Activated B cell treated with CpG ODN at 0.5 μM for 24 hours (primary cell): ENCODE measurements at regions of chr3 and their contacts with region 1.

Region 1: DNA sequence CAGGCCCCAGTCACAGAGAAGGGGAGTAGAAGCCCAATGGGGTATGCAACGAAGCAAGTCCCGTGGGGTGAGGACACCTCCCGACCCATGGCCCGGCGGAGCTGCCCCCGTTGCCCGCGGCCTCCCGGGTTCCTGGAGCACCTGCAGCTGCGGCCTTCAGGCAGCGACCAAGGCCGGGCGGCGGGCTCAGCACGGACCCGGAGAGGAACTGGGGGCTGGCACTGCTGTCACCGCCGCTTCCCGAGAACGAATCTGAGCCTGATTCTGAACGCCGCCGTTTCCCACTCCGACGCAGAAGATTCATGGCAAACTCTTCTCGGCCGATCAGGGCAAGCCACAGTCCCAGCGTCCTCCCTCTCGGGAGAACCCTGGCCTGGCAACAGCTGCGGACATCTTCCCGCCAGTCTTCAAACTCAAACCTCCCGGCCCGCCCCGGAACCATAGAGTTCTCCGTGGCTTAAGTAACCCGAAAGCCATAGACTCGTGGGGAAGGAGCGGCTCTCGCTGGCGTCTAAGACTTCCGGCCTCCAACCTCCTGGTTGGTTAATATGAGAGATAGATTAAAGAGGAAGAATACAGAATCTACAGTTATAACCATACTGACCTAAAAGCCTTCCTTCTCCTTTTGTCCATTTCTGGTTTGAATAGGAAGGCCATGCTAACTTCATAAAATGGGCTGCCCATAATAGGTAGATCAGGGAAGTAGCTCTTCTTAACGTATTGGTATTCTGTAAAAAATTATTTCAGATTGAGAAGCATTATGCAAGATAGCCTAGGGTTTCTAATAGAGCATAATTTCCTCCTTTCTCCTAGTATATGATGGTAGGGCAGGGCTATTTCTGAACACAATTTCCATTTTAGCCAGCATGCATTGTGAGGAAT is at the start of gene POLQ:
- DNase-seq: peak; percentile 74
- ATAC-seq: peak; percentile 91
- H3K4me3 Mint-ChIP-seq: peak within 1 kb of the TSS; percentile 90
- H3K27ac Mint-ChIP-seq: peak within 1 kb of the TSS; percentile 95
- H3K4me1 Mint-ChIP-seq: peaks cover 31% of the 10 kb centered on the region
- H3K27me3 Mint-ChIP-seq: no peaks in the 10 kb centered on the region
- CTCF ChIP-seq: no peak
- total RNA-seq, gene POLQ: 1.4 and 2.7 TPM in 2 replicates

Region 2: DNA sequence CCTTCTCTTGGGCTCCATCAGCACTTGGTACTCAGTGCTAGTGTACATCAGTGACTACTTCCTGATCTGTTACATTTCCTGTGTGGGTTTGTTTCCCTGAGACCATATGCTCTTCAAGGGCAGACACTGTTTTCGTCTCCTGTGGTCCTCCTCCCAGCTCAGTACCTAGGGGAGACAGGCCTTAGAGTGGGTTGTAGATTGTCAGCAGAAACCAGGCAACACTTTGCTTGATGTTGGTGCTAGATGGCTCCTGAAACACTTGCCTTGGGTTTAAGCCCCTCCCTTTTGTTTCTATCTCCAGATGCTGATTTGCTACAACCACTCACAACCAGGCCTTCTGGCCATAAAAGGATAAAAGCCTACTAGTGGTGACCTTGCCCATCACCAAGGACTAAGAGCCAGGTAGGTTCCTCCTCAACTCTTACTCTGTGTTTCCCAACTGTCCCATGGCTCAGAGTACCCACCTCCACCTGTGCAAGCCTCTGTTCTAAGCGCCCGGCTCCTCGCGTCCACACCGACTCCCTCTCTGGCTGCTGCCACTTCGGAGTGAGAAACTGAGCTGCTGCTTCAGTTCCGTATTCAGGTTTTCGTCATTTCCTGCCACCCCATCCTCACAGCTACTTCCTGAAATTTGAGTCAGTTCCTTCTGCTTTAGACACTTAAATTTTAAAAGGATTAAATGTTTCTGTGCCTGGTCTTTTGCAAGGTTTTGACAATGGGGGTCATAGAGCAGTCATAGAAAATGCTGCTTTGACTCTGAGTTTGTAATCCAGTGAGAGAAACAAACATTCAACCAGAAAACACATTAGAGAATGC is 114.7 kb after region 1 on chr3 and contains the start of gene HCLS1:
- CTCF ChIA-PET with region 1: no interaction called
- POLR2A ChIA-PET with region 1: interaction called, 42 read pairs
- intact Hi-C with region 1: loop called (anchors 1 kb)
- DNase-seq: peak; percentile 73
- ATAC-seq: peak; percentile 85
- H3K4me3 Mint-ChIP-seq: peak within 1 kb of the TSS; percentile 90
- H3K27ac Mint-ChIP-seq: peak within 1 kb of the TSS; percentile 96
- H3K4me1 Mint-ChIP-seq: peaks cover 55% of the 10 kb centered on the region
- H3K27me3 Mint-ChIP-seq: no peaks in the 10 kb centered on the region
- CTCF ChIP-seq: no peak
- total RNA-seq, gene HCLS1: 434 and 440 TPM in 2 replicates

Region 3: GRCh38 chr3:121979734-121980449 is 434.1 kb after region 1 on chr3:
- CTCF ChIA-PET with region 1: no interaction called
- POLR2A ChIA-PET with region 1: no interaction called
- intact Hi-C with region 1: loop called (anchors 5 kb)
- DNase-seq: no peak
- ATAC-seq: no peak
- H3K4me3 Mint-ChIP-seq: no peak overlapping the region
- H3K27ac Mint-ChIP-seq: peak overlapping the region; percentile 24
- H3K4me1 Mint-ChIP-seq: peaks cover 27% of the 10 kb centered on the region
- H3K27me3 Mint-ChIP-seq: no peaks in the 10 kb centered on the region
- CTCF ChIP-seq: no peak

Region 4: DNA sequence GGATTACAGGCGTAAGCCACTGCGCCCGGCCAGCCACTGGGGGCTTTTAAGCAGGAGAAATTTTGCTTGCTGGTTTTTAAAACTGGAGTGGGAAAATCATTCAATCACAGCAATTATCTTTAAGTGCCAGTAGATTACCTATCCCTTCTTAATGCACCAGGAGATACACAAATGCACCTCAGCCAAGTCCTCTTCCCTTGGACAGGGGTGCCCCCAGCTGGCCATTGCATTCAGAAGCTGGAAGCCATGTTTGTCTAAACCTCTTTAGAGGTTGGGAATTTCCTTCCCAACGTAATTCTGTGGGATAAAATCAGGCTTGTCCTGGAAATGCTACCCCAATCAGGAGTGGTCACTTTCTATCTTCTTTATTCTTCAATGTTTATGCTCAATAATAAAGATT is 810.6 kb after region 1 on chr3:
- CTCF ChIA-PET with region 1: interaction called, 5 read pairs
- POLR2A ChIA-PET with region 1: no interaction called
- intact Hi-C with region 1: loop called (anchors 1 kb)
- DNase-seq: no peak
- ATAC-seq: no peak
- H3K4me3 Mint-ChIP-seq: no peak overlapping the region
- H3K27ac Mint-ChIP-seq: no peak overlapping the region
- H3K4me1 Mint-ChIP-seq: no peaks in the 10 kb centered on the region
- H3K27me3 Mint-ChIP-seq: no peaks in the 10 kb centered on the region
- CTCF ChIP-seq: no peak

Region 5: DNA sequence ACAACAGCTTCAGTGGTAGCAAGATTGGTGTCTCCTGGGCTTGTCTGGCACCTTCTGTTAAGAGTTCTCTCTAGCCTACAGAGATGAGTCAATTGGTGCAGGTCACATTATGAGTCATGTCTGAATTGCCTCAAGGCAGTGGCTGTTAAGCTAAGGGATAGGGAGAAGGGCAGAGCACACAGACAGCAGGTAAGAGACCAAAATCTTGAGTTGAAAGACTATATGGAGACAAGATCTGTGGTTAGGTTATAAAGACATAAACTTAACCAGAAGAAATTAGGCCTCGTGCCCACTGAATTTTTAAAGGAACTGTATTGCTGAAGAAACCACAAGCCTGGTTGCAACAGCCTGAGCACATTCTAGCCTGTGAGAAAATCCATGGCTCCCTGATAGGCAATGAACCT is 988.1 kb after region 1 on chr3:
- CTCF ChIA-PET with region 1: no interaction called
- POLR2A ChIA-PET with region 1: no interaction called
- intact Hi-C with region 1: loop called (anchors 5 kb)
- DNase-seq: no peak
- ATAC-seq: peak; percentile 92
- H3K4me3 Mint-ChIP-seq: no peak overlapping the region
- H3K27ac Mint-ChIP-seq: no peak overlapping the region
- H3K4me1 Mint-ChIP-seq: peaks cover 3% of the 10 kb centered on the region
- H3K27me3 Mint-ChIP-seq: no peaks in the 10 kb centered on the region
- CTCF ChIP-seq: no peak

Region 6: DNA sequence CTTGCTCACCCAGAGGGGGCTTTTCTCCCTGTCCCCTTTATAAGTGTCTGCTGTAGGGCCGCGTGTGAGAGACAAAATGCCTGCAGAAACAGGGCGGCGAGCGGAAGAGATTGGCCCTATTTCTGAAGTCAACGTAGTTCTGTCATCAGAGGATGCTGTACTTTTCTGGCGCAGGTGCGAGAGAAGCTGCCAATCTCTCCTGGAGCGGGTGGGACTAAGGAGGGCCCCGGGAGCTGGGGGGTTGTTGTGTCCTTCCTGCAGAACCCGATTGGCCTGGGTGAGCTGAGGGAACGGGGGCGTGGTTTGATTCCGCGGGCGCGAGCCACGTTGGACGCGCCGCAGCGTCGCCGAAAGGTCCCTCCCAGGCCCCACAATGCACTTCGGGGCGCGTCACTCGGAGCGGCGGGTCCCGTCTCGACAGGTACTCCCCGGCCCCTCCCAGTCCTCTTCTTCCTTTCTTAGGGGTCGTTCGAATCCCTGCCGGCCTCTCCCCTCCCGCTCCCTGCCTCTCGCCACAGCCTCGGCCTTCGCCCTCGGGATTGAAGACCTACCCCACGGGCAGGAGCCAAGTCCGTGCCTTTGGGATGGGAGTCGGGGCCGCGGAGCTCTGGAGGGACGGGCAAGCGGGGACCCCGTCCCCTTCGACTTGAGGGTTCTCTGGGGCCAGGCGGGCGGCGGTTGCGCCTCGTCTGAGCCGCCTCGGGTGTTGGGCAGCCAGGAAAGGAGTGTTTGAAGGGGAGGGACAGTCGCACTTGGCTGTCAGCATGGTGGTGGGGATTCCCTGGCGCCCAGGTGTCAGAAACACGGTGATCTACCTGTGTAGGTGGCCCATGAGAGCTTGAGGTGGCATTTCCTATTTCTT is 1656.0 kb after region 1 on chr3 and contains the start of gene SEC22A:
- CTCF ChIA-PET with region 1: no interaction called
- POLR2A ChIA-PET with region 1: interaction called, 4 read pairs
- intact Hi-C with region 1: loop called (anchors 1 kb)
- DNase-seq: peak; percentile 88
- ATAC-seq: peak; percentile 96
- H3K4me3 Mint-ChIP-seq: peak within 1 kb of the TSS; percentile 96
- H3K27ac Mint-ChIP-seq: peak within 1 kb of the TSS; percentile 97
- H3K4me1 Mint-ChIP-seq: peaks cover 16% of the 10 kb centered on the region
- H3K27me3 Mint-ChIP-seq: peaks cover under 1% of the 10 kb centered on the region
- CTCF ChIP-seq: no peak
- total RNA-seq, gene SEC22A: 13.5 and 15.9 TPM in 2 replicates